H1 (cell line): ENCODE measurements at regions of chr12 and their contacts with region 1.

Region 1: DNA sequence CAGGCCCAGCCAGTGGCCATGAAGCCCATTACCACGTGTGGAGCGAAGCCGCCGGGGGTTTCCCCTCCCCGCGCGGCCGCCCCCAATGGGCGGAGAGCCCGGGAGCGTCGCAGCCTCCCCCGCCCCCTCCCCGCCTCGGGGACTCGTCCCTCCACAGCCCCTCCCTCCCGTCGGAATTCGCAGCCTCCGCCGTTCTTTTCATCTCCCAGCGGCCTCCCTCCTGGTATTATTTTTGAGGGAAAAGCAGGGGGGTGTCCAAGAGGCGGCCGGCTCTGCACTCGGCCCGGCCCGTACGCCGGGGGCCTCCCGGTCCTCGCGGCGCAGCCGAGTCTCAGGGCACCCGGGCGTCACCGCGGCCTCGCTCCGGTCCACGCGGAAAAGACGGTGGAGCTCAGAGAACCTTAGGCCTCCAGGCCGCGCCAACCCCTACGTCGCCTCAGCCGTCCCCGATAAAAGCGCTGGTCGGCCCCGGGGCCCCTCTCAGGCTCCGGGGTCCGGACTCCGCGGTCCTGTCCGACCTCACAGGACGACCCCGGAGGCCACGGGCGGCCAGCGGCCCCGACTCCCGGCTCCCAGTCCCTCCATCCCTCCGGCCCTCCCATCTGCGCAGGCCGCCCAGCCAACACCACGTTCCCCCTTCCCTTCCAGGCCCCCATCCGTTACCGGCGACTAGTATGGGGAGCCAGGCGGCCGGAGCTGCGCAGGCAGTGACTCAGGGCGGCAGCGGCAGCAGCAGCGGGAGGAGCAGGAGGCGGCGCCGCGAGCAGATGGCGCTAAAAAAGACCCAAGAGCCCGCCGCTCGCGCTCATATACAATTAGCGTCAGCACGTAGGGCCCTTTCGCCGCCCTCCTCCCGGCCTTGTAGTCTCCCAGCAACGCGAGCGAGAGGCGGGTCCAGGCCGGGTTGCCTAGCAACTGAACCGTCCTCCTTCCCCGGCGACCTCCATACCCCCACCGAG is at the start of gene NAP1L1:
- DNase-seq: peak; percentile 90 to 95
- H3K4me3 ChIP-seq: peak within 1 kb of the TSS; percentile 85 to 97 (median 90)
- H3K27ac ChIP-seq: peak within 1 kb of the TSS; percentile 98
- H3K4me1 ChIP-seq: peaks cover 0 to 18% (median 9%) of the 10 kb centered on the region in 4 experiments; a peak in 5 of 7 replicates
- H3K27me3 ChIP-seq: no peaks in the 10 kb centered on the region
- CTCF ChIP-seq: no peak
- EP300 ChIP-seq: no peak
- POLR2A ChIP-seq: peak; percentile 89 to 94
- RAD21 ChIP-seq: no peak
- total RNA-seq, gene NAP1L1: 1,114 and 1,159 TPM in 2 replicates

Region 2: DNA sequence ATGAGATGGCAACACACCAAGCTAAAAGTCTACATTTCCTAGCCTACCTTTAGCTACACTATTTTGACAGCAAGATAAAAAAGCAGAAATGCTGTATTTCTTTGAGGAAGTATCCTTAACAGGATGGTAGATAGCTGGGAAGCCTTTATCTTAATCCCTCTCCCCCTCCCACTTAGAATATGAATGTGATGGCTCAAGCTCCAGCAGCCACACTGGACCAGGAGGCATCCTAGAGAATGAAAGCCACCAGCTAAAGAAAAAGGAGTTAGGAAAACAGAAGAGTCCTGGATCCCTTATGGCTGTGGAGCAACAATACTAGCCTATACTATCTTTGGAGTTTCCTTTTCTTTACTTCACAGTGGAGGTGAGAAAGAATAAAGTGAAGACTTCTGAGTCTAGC is 14.8 kb before region 1 on chr12:
- CTCF ChIA-PET with region 1: interaction called, 6 read pairs
- POLR2A ChIA-PET with region 1: interaction called, 30 read pairs
- DNase-seq: no peak
- H3K4me3 ChIP-seq: no peak overlapping the region
- H3K27ac ChIP-seq: no peak overlapping the region
- H3K4me1 ChIP-seq: peaks cover 0 to 9% (median 3%) of the 10 kb centered on the region in 4 experiments; a peak in 4 of 7 replicates
- H3K27me3 ChIP-seq: no peaks in the 10 kb centered on the region
- CTCF ChIP-seq: no peak
- EP300 ChIP-seq: no peak
- POLR2A ChIP-seq: no peak
- RAD21 ChIP-seq: no peak

Region 3: GRCh38 chr12:76101739-76102385 is 17.7 kb after region 1 on chr12:
- CTCF ChIA-PET with region 1: interaction called, 5 read pairs
- POLR2A ChIA-PET with region 1: interaction called, 12 read pairs
- DNase-seq: peak in 1 of 2 experiments; percentile 44
- H3K4me3 ChIP-seq: peak overlapping the region in 1 of 4 experiments; percentile 14; a peak in 1 of 8 replicates
- H3K27ac ChIP-seq: no peak overlapping the region
- H3K4me1 ChIP-seq: peaks cover 3 to 10% (median 9%) of the 10 kb centered on the region in 4 experiments; a peak in 5 of 7 replicates
- H3K27me3 ChIP-seq: no peaks in the 10 kb centered on the region
- CTCF ChIP-seq: no peak
- EP300 ChIP-seq: no peak
- POLR2A ChIP-seq: no peak
- RAD21 ChIP-seq: no peak

Region 4: GRCh38 chr12:76348079-76348901 is 264.1 kb after region 1 on chr12 and contains the start of gene BBS10:
- CTCF ChIA-PET with region 1: interaction called, 3 read pairs
- POLR2A ChIA-PET with region 1: interaction called, 21 read pairs
- DNase-seq: peak; percentile 73 to 89
- H3K4me3 ChIP-seq: peak within 1 kb of the TSS; percentile 85 to 89 (median 85)
- H3K27ac ChIP-seq: peak within 1 kb of the TSS; percentile 89
- H3K4me1 ChIP-seq: peaks cover 0 to 2% (median 0%) of the 10 kb centered on the region in 4 experiments; a peak in 2 of 7 replicates
- H3K27me3 ChIP-seq: no peaks in the 10 kb centered on the region
- CTCF ChIP-seq: peak; percentile 30 to 52 (median 51); a peak in 3 of 4 replicates
- EP300 ChIP-seq: no peak
- POLR2A ChIP-seq: peak; percentile 52 to 87
- RAD21 ChIP-seq: peak; percentile 44 to 53
- total RNA-seq, gene BBS10: 9.2 and 10.0 TPM in 2 replicates